ENCODE measurements at regions of chr9 and their contacts with region 1.

Region 1: DNA sequence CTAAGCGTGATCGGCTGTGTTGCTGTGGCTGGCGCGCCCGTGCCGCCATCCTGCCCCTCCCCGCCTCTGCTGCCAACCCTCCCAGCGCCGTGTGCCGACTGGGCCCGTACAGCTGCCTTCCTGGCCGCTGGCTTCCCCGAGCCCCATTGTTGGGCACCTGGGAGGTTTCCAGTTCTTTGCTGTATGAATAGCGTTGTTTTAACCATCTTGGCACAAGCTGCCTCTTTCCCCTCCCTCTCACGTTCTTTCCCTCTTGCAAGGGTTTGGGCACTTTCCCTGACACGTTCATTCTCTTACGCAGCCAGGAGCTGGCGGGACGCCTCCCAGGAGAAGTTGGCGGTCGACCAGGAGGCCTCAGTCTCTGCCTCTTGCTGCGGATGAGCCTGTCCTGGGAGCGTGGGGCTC is 43.1 kb upstream of the RXRA start:
- DNase-seq: peak; percentile 53 to 79
- ATAC-seq: peak; percentile 67 to 68
- H3K4me3 ChIP-seq: peak overlapping the region in 1 of 4 donors; percentile 6
- H3K27ac ChIP-seq: peak overlapping the region; percentile 67 to 80 (median 72)
- H3K4me1 ChIP-seq: peaks cover 19 to 31% of the 10 kb centered on the region in 2 donors
- H3K27me3 ChIP-seq: no peaks in the 10 kb centered on the region
- CTCF ChIP-seq: no peak
- POLR2A ChIP-seq: no peak

Region 2: GRCh38 chr9:134171316-134172197 is 111.6 kb before region 1 on chr9:
- in situ Hi-C with region 1: no loop called
- intact Hi-C with region 1: loop called (anchors 1 kb)
- DNase-seq: peak in 1 of 2 donors; percentile 47
- ATAC-seq: peak in 1 of 2 donors; percentile 13
- H3K4me3 ChIP-seq: no peak overlapping the region
- H3K27ac ChIP-seq: peak overlapping the region in 3 of 4 donors; percentile 19 to 64 (median 63)
- H3K4me1 ChIP-seq: peaks cover 16 to 20% of the 10 kb centered on the region in 2 donors
- H3K27me3 ChIP-seq: no peaks in the 10 kb centered on the region
- CTCF ChIP-seq: no peak
- POLR2A ChIP-seq: no peak

Region 3: DNA sequence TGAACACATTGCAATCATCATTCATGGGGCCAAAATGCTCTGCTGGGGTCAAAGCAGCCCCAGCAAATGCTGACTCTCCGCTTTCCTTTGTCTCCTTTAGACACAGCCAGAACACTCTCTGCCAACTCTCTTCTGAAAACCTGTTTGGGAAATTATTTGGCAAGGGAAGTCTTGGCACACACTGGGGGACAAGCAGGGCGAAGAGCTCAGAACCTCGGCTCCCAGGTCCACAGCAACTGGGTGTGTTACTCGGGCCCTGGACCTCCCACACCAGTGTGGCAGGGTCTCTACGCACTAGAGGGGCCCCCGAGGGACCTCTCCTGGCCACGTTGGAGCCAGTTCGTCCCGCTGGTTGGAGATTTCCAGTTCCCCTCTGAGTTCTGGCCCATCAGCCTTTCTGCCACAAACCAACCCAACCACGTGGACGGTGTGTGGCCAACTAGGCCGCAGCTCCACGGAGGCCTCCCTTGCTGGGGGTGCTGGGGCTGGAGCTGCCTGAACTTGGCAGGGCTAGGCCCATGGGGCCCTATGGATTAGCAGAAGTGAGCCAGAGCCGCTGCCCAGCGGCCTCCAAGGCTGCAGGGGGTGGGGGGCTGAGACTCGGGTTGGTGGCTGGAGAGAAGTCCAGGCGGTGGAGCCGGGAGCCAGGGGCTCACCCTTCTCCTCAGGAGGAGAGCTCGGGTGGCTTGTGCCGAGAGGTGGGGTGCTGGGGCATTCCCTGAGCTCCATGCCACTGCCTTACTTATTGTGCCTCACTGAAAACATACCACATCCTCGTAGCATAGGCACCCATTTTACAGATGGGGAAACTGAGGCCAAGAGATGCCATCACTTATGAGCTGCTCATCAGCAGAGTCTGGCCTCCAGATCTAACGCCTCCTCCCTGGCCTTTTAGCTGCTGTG is 72.0 kb before region 1 on chr9:
- in situ Hi-C with region 1: no loop called
- intact Hi-C with region 1: loop called (anchors 2 kb)
- DNase-seq: peak; percentile 61 to 74
- ATAC-seq: peak; percentile 68 to 80
- H3K4me3 ChIP-seq: no peak overlapping the region
- H3K27ac ChIP-seq: peak overlapping the region; percentile 70 to 82 (median 79)
- H3K4me1 ChIP-seq: peaks cover 35 to 36% of the 10 kb centered on the region in 2 donors
- H3K27me3 ChIP-seq: no peaks in the 10 kb centered on the region
- CTCF ChIP-seq: no peak
- POLR2A ChIP-seq: no peak

Region 4: DNA sequence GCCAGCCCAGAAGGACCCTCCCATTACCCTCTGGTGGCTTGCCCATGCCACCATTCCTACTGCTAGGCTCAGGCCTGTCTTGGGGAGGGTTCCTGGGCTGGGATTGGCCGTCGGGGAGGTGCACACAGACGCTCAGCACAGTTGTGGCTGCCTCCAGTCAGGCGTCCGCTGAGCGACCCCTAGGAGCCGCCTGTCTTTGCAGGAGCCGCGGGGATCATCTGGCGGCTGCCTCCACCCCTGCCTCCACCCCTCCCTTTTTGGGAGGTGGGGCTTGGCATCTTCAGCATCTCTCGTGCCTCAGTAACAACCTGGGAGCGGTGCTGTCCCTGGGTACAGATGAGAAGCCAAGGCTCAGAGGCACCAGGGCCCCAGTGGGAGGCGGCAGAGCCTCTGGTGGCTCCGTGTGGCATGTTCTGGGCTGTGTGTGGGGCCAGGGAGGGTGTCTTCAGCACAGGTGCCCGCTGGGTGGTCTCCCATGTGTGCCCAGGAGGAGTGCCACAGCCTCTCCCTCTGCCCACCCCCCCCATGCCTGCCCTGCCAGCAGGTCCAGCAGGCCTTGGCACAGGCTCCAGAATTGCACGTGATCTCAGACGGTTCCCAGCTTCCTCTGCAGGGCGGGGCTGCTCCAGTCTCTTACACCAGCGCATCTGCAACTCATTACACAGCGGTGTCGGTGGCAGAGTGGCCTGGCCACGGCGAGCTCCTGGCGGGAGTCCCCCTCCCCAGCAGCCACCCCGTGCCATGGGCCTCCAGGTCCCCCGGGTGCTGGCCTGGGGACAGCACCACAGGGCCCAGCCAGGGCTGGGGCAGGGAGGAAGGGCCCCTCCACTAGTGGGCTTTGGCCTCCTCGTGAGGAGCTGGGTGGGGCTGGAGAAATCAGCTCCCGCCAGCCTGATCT is 82.9 kb after region 1 on chr9:
- in situ Hi-C with region 1: no loop called
- intact Hi-C with region 1: loop called (anchors 5 kb)
- DNase-seq: peak; percentile 92 to 97
- ATAC-seq: peak; percentile 80
- H3K4me3 ChIP-seq: peak overlapping the region; percentile 30 to 41 (median 38)
- H3K27ac ChIP-seq: peak overlapping the region; percentile 92 to 97 (median 96)
- H3K4me1 ChIP-seq: peaks cover 85 to 87% of the 10 kb centered on the region in 2 donors
- H3K27me3 ChIP-seq: no peaks in the 10 kb centered on the region
- CTCF ChIP-seq: peak in 2 of 5 experiments; percentile 31 to 47
- POLR2A ChIP-seq: peak in 1 of 2 donors; percentile 92

Region 5: DNA sequence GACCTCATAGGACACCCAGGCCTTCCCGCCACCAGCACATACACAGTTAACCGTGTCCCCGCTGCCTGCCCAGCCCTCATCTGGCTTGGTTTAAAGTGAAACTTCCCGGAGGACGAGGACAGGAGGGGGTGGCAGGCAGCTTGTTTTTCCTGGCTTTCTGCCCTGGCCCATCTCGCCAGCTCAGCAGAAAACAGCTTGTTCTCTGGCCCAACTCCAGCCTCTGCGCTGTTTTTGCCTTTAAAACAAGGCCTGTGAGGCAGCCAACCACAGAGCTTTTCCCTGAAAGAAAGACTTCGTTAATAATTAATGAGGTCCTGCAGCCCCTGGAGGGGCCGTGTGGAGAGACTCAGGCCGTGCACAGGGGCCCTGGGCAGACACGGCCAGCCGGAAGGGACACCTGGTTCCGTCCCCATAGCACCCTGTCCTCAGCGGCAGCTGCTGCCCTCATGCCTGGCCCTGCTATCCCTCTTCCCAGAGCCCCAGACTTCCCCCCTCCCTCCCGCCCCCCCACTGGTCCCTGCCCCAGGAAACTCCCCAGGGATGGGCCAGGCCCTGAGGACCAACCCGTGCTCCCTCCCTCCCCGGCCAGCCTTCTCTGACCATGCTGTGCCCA is 151.9 kb after region 1 on chr9:
- in situ Hi-C with region 1: no loop called
- intact Hi-C with region 1: loop called (anchors 2 kb)
- DNase-seq: peak; percentile 95 to 96
- ATAC-seq: peak; percentile 71 to 73
- H3K4me3 ChIP-seq: peak overlapping the region; percentile 10 to 30 (median 22)
- H3K27ac ChIP-seq: peak overlapping the region; percentile 92 to 97 (median 94)
- H3K4me1 ChIP-seq: peaks cover 87 to 88% of the 10 kb centered on the region in 2 donors
- H3K27me3 ChIP-seq: no peaks in the 10 kb centered on the region
- CTCF ChIP-seq: no peak
- POLR2A ChIP-seq: no peak

Measured in gastrocnemius medialis (tissue), 4 donors.